ENCODE measurements at regions of chr11 and their contacts with region 1.

Region 1: GRCh38 chr11:121446752-121447156 is 5.4 kb upstream of the SORL1 start:
- DNase-seq: no peak
- H3K4me3 ChIP-seq: no peak overlapping the region
- H3K27ac ChIP-seq: no peak overlapping the region
- H3K4me1 ChIP-seq: peaks cover 0 to 11% (median 6%) of the 10 kb centered on the region in 4 donors
- H3K27me3 ChIP-seq: peaks cover 0 to 6% (median 0%) of the 10 kb centered on the region in 4 donors
- CTCF ChIP-seq: peak; percentile 4 to 10 (median 9)
- EP300 ChIP-seq: no peak
- POLR2A ChIP-seq: no peak

Region 2: GRCh38 chr11:121321614-121322243 is 125.0 kb before region 1 on chr11:
- intact Hi-C with region 1: loop called (anchors 10 kb)
- DNase-seq: no peak
- H3K4me3 ChIP-seq: no peak overlapping the region
- H3K27ac ChIP-seq: no peak overlapping the region
- H3K4me1 ChIP-seq: no peaks in the 10 kb centered on the region
- H3K27me3 ChIP-seq: no peaks in the 10 kb centered on the region
- CTCF ChIP-seq: peak; percentile 43 to 49 (median 46)
- EP300 ChIP-seq: no peak
- POLR2A ChIP-seq: no peak

Region 3: DNA sequence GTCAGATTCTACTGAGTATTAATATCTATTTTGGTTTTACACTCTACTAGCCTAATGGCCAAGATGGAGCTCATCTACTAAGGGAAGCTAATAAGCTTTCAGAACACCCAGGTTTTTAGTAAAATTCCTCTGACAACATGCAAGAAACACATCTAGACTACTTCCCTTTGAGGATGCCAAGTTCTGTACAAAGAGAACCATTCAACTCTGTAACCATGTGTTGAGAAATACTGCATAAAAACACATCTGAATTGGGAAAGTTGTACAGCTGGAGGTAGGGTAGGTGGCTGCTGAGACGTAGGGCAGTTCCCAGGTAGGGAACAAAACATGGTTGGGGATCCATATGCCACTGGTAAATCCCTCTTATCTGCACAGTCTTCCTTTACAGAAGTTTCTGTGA is 88.0 kb before region 1 on chr11:
- intact Hi-C with region 1: no loop called
- DNase-seq: no peak
- H3K4me3 ChIP-seq: no peak overlapping the region
- H3K27ac ChIP-seq: no peak overlapping the region
- H3K4me1 ChIP-seq: no peaks in the 10 kb centered on the region
- H3K27me3 ChIP-seq: no peaks in the 10 kb centered on the region
- CTCF ChIP-seq: no peak
- EP300 ChIP-seq: no peak
- POLR2A ChIP-seq: no peak

Region 4: GRCh38 chr11:121435551-121436511 is 10.9 kb before region 1 on chr11:
- intact Hi-C with region 1: no loop called
- DNase-seq: no peak
- H3K4me3 ChIP-seq: no peak overlapping the region
- H3K27ac ChIP-seq: no peak overlapping the region
- H3K4me1 ChIP-seq: peaks cover 0 to 7% (median 4%) of the 10 kb centered on the region in 4 donors
- H3K27me3 ChIP-seq: no peaks in the 10 kb centered on the region
- CTCF ChIP-seq: no peak
- EP300 ChIP-seq: no peak
- POLR2A ChIP-seq: no peak

Measured in esophagus muscularis mucosa (tissue), 4 donors.